ENCODE measurements at regions of chr11 and their contacts with region 1.

Region 1: DNA sequence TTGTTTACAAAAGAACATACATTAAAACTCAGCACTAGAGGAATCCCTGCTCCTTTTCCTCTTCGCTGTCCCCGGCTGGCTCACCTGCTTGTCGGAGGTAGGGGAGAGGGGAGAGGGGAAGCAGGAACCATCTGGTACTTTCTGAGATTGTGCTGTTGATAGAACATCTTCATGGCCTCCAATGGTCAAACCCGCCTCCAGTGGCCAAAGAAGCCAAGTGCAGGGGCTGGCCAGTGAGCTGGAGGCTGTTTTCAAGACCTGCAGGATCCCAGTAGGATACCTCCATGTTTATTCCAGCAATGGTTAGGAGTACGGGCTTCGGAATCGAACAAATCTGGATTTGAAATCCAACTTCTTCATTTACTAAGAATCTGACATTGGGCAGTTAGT is 92.6 kb downstream of the PKNOX2 start:
- DNase-seq: peak in 1 of 2 donors; percentile 14
- ATAC-seq: no peak
- H3K4me3 ChIP-seq: no peak overlapping the region
- H3K27ac ChIP-seq: no peak overlapping the region
- H3K4me1 ChIP-seq: no peaks in the 10 kb centered on the region
- H3K27me3 ChIP-seq: no peaks in the 10 kb centered on the region

Region 2: GRCh38 chr11:125272092-125272491 is 14.9 kb after region 1 on chr11:
- intact Hi-C with region 1: loop called in 1 of 2 experiments (anchors 2 kb)
- DNase-seq: no peak
- ATAC-seq: no peak
- H3K4me3 ChIP-seq: no peak overlapping the region
- H3K27ac ChIP-seq: no peak overlapping the region
- H3K4me1 ChIP-seq: peaks cover 0 to 9% of the 10 kb centered on the region in 2 donors
- H3K27me3 ChIP-seq: no peaks in the 10 kb centered on the region

Measured in aorta (tissue), 5 donors.